Right ventricle myocardium superior (tissue), 1 donor: ENCODE measurements at regions of chr13 and their contacts with region 1.

Region 1: DNA sequence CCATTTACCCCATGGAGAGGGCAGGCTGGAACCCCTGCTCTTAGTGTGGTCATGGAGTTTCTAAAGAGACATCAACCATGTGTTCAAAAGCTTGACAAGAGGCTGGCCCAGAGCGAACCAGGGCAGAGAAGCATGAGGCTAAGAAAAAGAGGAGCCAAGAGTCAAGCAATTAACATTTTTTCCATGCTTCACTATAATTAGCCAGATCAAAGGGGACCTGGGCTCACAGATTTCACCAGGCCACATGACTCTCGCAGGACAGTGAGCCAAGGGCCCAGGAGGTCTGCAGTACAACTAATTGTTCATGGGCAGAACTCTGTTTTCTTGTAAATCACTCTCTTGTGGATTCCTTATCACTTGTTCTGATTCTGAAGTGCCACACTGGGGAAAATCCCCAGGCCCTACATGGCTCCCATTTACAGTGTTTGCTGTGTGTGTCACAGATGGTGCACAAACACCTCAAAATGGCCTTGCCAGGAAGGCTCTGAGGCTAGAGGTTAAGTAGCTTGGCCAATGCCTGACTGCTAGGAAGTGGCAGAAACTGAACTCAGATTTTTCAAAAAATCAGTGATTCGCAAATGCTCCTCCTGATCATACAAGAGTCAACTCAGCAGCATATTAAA is 101.2 kb downstream of the LHFPL6 start:
- DNase-seq: peak; percentile 56
- ATAC-seq: peak; percentile 89

Region 2: DNA sequence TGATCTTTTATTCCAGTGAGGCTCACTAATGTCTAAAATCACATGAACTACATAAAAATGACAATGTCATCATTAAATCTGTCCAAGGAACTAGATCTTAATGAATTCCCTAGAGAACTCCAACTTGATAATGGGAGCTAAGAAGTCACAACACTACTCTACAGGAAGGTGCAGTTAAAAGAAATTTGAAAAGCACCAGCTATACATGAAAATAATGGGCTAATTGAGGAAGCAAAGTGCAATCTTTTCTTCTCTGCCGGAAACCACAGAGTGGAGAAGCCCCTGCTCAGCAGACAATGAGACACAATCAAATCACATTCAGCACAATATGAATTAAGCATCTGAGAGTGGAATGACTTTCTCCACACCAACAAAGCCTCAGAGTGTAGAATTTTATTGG is 160.6 kb before region 1 on chr13:
- intact Hi-C with region 1: no loop called
- DNase-seq: no peak
- ATAC-seq: no peak

Region 3: DNA sequence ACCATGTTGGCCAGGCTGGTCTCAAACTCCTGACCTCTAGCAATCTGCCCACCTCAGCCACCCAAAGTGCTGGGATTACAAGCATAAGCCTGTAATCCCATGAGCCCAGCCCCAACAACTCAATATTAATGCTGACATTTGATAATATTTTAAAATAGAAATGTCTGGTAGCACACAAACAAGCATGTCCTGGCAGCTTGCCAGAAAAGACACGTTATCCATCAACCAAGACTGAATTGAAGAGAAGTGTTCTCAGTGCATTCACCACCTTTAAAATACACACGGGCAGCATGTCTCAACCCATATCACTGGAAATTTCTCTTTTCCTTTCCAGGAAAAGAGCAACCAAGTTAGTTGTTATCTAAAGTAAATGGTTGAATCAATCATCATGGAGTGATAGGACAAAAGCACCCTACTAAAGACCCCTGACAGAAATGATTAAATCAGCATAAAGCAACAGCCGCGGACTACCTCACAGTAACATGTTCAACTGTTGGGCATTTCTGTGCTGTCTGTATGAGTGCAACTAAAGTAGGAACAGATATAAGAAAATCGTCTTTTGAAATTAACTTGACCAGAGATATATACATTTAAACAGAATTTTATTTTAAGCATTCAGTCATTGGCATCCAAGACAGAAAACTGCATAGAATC is 76.2 kb after region 1 on chr13:
- intact Hi-C with region 1: loop called (anchors 10 kb)
- DNase-seq: no peak
- ATAC-seq: peak; percentile 58